ENCODE measurements at regions of chr7 and their contacts with region 1.

Region 1: GRCh38 chr7:98168181-98168905 is 42.9 kb upstream of the BHLHA15 start:
- DNase-seq: peak; percentile 67
- H3K4me3 ChIP-seq: no peak overlapping the region
- H3K27ac ChIP-seq: no peak overlapping the region
- H3K4me1 ChIP-seq: peaks cover 3% of the 10 kb centered on the region
- H3K27me3 ChIP-seq: no peaks in the 10 kb centered on the region
- CTCF ChIP-seq: peak; percentile 66 to 73
- POLR2A ChIP-seq: no peak

Region 2: DNA sequence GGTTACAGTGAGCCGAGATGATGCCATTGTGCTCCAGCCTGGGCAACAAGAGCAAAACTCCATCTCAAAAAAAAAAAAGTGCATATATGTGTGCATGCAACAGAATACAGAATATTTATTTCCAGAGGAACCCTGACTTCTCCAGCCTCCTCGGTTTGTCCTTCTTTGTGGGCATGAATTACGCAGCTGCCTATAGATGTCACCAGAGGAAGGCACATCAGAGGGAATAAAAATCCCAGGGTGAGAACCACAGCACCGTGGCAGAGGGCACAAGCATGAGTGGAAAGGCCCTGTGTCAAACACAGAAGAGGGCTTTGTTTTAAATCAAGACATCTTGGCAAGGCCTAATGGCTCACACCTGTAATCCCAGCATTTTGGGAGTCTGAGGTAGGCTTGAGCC is 154.0 kb before region 1 on chr7:
- CTCF ChIA-PET with region 1: interaction called, 870 read pairs
- POLR2A ChIA-PET with region 1: no interaction called
- dilution Hi-C with region 1: loop called (anchors 25 kb)
- intact Hi-C with region 1: no loop called
- DNase-seq: no peak
- H3K4me3 ChIP-seq: no peak overlapping the region
- H3K27ac ChIP-seq: no peak overlapping the region
- H3K4me1 ChIP-seq: no peaks in the 10 kb centered on the region
- H3K27me3 ChIP-seq: no peaks in the 10 kb centered on the region
- CTCF ChIP-seq: no peak
- POLR2A ChIP-seq: no peak

Region 3: GRCh38 chr7:98119256-98119918 is 49.0 kb before region 1 on chr7:
- CTCF ChIA-PET with region 1: interaction called, 34 read pairs
- POLR2A ChIA-PET with region 1: no interaction called
- dilution Hi-C with region 1: no loop called
- intact Hi-C with region 1: no loop called
- DNase-seq: no peak
- H3K4me3 ChIP-seq: no peak overlapping the region
- H3K27ac ChIP-seq: no peak overlapping the region
- H3K4me1 ChIP-seq: peaks cover 3% of the 10 kb centered on the region
- H3K27me3 ChIP-seq: no peaks in the 10 kb centered on the region
- CTCF ChIP-seq: no peak
- POLR2A ChIP-seq: no peak

Region 4: GRCh38 chr7:98142658-98143057 is 25.7 kb before region 1 on chr7:
- CTCF ChIA-PET with region 1: interaction called, 13 read pairs
- POLR2A ChIA-PET with region 1: no interaction called
- dilution Hi-C with region 1: no loop called
- intact Hi-C with region 1: no loop called
- DNase-seq: no peak
- H3K4me3 ChIP-seq: no peak overlapping the region
- H3K27ac ChIP-seq: no peak overlapping the region
- H3K4me1 ChIP-seq: no peaks in the 10 kb centered on the region
- H3K27me3 ChIP-seq: no peaks in the 10 kb centered on the region
- CTCF ChIP-seq: no peak
- POLR2A ChIP-seq: no peak

Region 5: GRCh38 chr7:98178347-98178746 is 10.0 kb after region 1 on chr7:
- CTCF ChIA-PET with region 1: interaction called, 39 read pairs
- POLR2A ChIA-PET with region 1: no interaction called
- dilution Hi-C with region 1: no loop called
- intact Hi-C with region 1: no loop called
- DNase-seq: no peak
- H3K4me3 ChIP-seq: no peak overlapping the region
- H3K27ac ChIP-seq: no peak overlapping the region
- H3K4me1 ChIP-seq: no peaks in the 10 kb centered on the region
- H3K27me3 ChIP-seq: no peaks in the 10 kb centered on the region
- CTCF ChIP-seq: no peak
- POLR2A ChIP-seq: no peak

Region 6: GRCh38 chr7:98204670-98205069 is 36.3 kb after region 1 on chr7:
- CTCF ChIA-PET with region 1: no interaction called
- POLR2A ChIA-PET with region 1: no interaction called
- dilution Hi-C with region 1: no loop called
- intact Hi-C with region 1: no loop called
- DNase-seq: no peak
- H3K4me3 ChIP-seq: no peak overlapping the region
- H3K27ac ChIP-seq: no peak overlapping the region
- H3K4me1 ChIP-seq: no peaks in the 10 kb centered on the region
- H3K27me3 ChIP-seq: no peaks in the 10 kb centered on the region
- CTCF ChIP-seq: no peak
- POLR2A ChIP-seq: no peak

Region 7: GRCh38 chr7:98655611-98656010 is 487.3 kb after region 1 on chr7:
- CTCF ChIA-PET with region 1: no interaction called
- POLR2A ChIA-PET with region 1: no interaction called
- dilution Hi-C with region 1: no loop called
- intact Hi-C with region 1: no loop called
- DNase-seq: no peak
- H3K4me3 ChIP-seq: no peak overlapping the region
- H3K27ac ChIP-seq: no peak overlapping the region
- H3K4me1 ChIP-seq: no peaks in the 10 kb centered on the region
- H3K27me3 ChIP-seq: no peaks in the 10 kb centered on the region
- CTCF ChIP-seq: no peak
- POLR2A ChIP-seq: no peak

Measured in endothelial cell of umbilical vein (primary cell).